GM12878 (cell line): ENCODE measurements at regions of chr11 and their contacts with region 1.

Region 1: GRCh38 chr11:73242251-73243079 is 24.4 kb downstream of the P2RY2 start:
- DNase-seq: peak; percentile 48
- ATAC-seq: peak; percentile 97
- H3K4me3 ChIP-seq: no peak overlapping the region
- H3K27ac ChIP-seq: peak overlapping the region; percentile 46
- H3K4me1 ChIP-seq: peaks cover 18% of the 10 kb centered on the region
- H3K27me3 ChIP-seq: no peaks in the 10 kb centered on the region
- CTCF ChIP-seq: peak; percentile 73 to 90 (median 80)
- EP300 ChIP-seq: no peak
- POLR2A ChIP-seq: peak; percentile 53
- RAD21 ChIP-seq: peak; percentile 89

Region 2: GRCh38 chr11:72179804-72180396 is 1062.6 kb before region 1 on chr11:
- CTCF ChIA-PET with region 1: no interaction called
- POLR2A ChIA-PET with region 1: interaction called, 10 read pairs
- RAD21 ChIA-PET with region 1: no interaction called
- SMC1A ChIA-PET with region 1: no interaction called
- in situ Hi-C with region 1: no loop called
- intact Hi-C with region 1: no loop called
- DNase-seq: no peak
- ATAC-seq: no peak
- H3K4me3 ChIP-seq: no peak overlapping the region
- H3K27ac ChIP-seq: no peak overlapping the region
- H3K4me1 ChIP-seq: peaks cover 5% of the 10 kb centered on the region; the same call in 1 of the 2 replicates
- H3K27me3 ChIP-seq: no peaks in the 10 kb centered on the region; a peak in 1 of 4 replicates
- CTCF ChIP-seq: no peak
- EP300 ChIP-seq: no peak
- POLR2A ChIP-seq: no peak
- RAD21 ChIP-seq: no peak

Region 3: GRCh38 chr11:73141031-73141847 is 101.2 kb before region 1 on chr11:
- CTCF ChIA-PET with region 1: no interaction called
- POLR2A ChIA-PET with region 1: no interaction called
- RAD21 ChIA-PET with region 1: no interaction called
- SMC1A ChIA-PET with region 1: no interaction called
- in situ Hi-C with region 1: no loop called
- intact Hi-C with region 1: no loop called
- DNase-seq: no peak
- ATAC-seq: peak; percentile 43
- H3K4me3 ChIP-seq: peak overlapping the region; percentile 90
- H3K27ac ChIP-seq: peak overlapping the region; percentile 99
- H3K4me1 ChIP-seq: peaks cover 31% of the 10 kb centered on the region
- H3K27me3 ChIP-seq: no peaks in the 10 kb centered on the region
- CTCF ChIP-seq: no peak
- EP300 ChIP-seq: no peak
- POLR2A ChIP-seq: peak; percentile 70
- RAD21 ChIP-seq: peak; percentile 11; the same call in 1 of the 2 replicates